Right ventricle myocardium superior (tissue), 1 donor: ENCODE measurements at regions of chr4 and their contacts with region 1.

Region 1: DNA sequence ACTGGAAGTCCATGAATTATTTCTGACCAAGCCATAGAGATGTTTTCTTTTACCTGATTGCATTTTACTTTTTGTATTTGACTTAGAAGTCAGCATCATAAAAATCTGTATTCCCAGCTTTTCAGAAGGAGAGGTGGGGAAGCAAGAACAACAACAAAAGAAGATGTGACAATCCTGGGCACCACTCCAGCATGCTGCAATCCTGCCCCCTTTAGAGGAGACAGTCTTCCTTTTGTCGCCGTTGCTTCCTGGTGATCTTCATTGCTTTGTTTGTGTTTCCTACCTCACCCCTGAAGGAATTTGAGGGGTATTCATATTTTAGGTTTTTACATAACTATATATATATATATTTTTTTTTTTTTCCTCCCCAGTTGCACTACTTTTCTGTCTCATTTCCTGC is 3.8 kb downstream of the QRFPR start:
- DNase-seq: no peak
- ATAC-seq: no peak

Region 2: GRCh38 chr4:121421594-121421993 is 44.5 kb after region 1 on chr4:
- intact Hi-C with region 1: loop called (anchors 2 kb)
- DNase-seq: no peak
- ATAC-seq: peak; percentile 75